ENCODE measurements at regions of chr16 and their contacts with region 1.

Region 1: DNA sequence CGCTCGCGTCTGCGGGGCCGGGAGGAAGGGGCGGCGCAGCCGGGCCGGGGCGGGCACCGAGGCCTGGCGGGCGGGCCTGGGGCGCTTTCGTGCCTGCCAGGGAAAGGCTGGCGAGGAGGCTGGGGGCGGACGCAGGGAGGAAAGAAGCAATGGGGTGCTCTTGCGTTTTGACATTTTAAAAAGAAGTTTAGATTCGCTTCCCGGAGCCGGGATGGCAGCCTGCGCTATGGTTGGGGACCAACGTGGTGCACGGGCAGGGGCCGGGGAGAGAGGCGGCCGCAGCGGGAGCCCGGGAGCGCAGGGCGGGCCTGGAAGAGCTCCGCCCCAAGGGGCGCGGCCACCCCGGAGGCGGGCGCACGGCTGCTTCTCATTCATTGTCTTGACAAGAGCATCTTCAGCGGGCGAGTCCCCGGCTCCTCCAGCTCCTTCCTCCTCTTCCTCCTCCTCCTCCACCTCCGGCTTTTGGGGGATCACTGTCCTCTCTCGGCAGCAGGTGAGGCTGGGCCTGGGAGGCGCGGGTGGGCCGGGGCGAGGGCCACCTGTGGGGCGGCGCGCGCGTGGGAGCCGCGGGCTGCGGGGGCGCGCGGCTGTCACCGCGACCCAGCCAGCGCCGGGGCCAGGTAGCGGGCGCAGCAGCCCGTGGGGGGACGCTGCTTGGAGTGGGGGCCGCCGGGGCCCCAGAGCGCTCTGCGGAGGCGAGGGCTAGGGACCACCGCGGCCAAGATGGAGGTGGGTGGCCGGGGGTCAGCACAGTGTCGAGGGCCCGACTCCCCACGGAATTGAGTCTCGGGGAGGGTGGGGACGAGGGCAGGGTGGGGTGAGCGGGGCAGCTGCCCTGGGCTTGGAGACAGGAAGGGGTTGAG is at the start of gene CORO1A:
- DNase-seq: peak; percentile 91
- ATAC-seq: peak; percentile 32
- H3K4me3 Mint-ChIP-seq: peak within 1 kb of the TSS; percentile 100
- H3K27ac Mint-ChIP-seq: peak within 1 kb of the TSS; percentile 100
- H3K4me1 Mint-ChIP-seq: peaks cover 29% of the 10 kb centered on the region
- H3K27me3 Mint-ChIP-seq: no peaks in the 10 kb centered on the region
- total RNA-seq, gene CORO1A: 1,426 to 1,488 TPM

Region 2: GRCh38 chr16:30065143-30065850 is 118.2 kb before region 1 on chr16 and contains the start of gene ALDOA:
- POLR2A ChIA-PET with region 1: interaction called, 67 read pairs
- DNase-seq: peak; percentile 95
- ATAC-seq: peak; percentile 85
- H3K4me3 Mint-ChIP-seq: peak within 1 kb of the TSS; percentile 100
- H3K27ac Mint-ChIP-seq: peak within 1 kb of the TSS; percentile 98
- H3K4me1 Mint-ChIP-seq: peaks cover 22% of the 10 kb centered on the region
- H3K27me3 Mint-ChIP-seq: no peaks in the 10 kb centered on the region
- total RNA-seq, gene ALDOA: 1,486 to 1,632 TPM

Region 3: DNA sequence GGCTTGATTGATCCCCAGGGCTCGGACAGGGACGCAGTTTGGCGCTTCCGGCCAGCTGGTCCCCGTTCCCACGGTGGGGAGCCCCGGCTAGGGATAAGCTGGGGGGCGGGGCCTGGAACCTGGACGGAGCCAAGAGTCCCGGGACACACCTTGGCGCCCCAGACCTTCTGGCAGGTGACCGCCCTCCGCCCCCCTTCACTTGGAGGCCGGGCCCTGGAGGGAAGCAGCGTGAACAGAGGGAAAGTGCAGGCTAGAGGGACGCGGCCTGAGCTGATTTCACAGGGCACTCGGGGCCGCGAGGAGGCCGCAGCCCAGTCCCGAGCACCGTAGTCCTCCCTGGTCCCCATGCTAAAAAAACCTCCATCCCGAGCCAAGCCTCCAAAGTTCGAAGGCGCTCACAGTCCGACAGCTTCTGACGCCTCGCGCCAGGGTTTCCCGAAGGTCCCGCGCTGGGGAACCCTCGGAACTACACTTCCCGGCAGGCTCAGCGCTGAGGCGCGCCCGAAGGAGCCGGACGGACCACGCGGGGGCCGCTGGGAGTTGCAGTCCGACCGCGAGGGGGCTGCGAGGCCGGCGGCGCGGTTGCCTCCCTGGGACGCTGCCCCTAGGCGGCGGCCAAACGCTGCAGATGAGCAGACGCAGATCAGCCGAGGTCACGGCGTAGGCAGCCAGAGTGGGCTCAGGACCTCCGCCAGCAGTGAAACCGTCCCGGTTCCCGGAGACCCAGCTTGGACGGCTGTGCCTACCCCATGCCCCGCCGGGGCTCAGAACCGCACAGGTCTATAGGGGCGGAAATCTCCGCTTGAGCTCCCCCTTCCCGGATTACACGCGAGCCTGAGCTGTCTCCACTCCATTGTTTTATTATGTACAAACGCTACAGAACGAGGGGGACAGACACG is 91.7 kb before region 1 on chr16 and contains the start of gene TBX6:
- POLR2A ChIA-PET with region 1: interaction called, 132 read pairs
- DNase-seq: peak; percentile 97
- ATAC-seq: peak; percentile 77
- H3K4me3 Mint-ChIP-seq: peak within 1 kb of the TSS; percentile 86
- H3K27ac Mint-ChIP-seq: peak within 1 kb of the TSS; percentile 96
- H3K4me1 Mint-ChIP-seq: peaks cover 47% of the 10 kb centered on the region
- H3K27me3 Mint-ChIP-seq: no peaks in the 10 kb centered on the region
- total RNA-seq, gene TBX6: 2.4 to 3.0 TPM

Region 4: DNA sequence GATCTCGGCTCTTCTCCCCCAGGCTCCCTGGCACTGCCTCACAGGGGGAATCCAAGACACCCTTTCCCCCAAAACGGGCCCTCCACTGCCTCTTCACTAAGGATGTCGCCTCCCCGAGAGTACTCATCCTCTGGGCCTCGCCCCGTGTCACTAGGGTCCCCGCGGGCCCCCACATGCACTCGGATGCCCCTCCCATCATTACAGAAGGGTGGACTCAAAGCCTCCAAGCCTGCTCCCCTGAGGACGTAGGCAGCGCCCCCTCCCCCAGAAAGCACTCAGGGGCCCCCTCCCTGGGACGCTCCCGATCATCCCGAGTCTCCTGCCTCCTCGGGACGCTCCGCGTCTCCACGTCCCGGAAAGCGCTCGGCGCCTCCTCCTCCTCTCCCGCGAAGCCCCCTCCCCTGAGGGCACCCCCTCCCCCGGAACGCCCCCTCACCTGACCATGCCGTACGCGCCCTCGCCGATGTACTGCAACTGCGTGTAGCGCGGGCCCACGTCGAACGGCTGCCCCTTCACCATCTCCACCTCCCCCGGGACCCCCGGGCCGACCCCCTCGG is 60.8 kb before region 1 on chr16:
- POLR2A ChIA-PET with region 1: interaction called, 66 read pairs
- DNase-seq: peak; percentile 51
- ATAC-seq: peak; percentile 30
- H3K4me3 Mint-ChIP-seq: peak overlapping the region; percentile 89
- H3K27ac Mint-ChIP-seq: peak overlapping the region; percentile 88
- H3K4me1 Mint-ChIP-seq: peaks cover 27% of the 10 kb centered on the region
- H3K27me3 Mint-ChIP-seq: no peaks in the 10 kb centered on the region

Region 5: DNA sequence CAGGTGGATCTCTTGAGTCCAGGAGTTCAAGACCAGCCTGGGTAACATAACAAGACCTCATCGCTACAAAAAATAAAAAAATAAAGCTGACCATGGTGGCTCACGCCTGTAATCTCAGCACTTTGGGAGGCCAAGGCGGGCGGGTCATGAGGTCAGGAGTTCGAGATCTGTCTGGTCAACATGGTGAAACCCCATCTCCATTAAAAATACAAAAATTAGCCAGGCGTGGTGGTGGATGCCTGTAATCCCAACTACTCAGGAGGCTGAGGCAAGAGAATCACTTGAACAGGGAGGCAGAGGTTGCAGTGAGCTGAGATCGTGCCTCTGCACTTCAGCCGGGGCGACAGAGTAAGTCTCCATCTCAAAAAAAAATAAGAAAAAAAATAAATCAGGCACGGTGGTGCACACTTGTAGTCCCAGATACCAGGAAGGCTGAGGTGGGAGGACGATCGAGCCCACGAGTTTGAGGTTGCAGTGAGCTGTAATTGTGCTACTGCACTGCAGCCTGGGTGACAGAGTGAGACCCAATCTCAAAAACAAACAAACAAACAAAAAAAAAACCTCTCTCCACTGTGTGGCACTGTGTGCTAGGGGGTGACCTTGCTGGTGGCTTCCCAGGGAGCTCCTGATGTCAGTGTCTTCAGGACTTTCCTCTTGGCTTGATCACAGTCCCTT is 40.7 kb before region 1 on chr16:
- POLR2A ChIA-PET with region 1: interaction called, 70 read pairs
- DNase-seq: no peak
- ATAC-seq: peak; percentile 76
- H3K4me3 Mint-ChIP-seq: peak overlapping the region; percentile 7
- H3K27ac Mint-ChIP-seq: peak overlapping the region; percentile 31
- H3K4me1 Mint-ChIP-seq: peaks cover 16% of the 10 kb centered on the region
- H3K27me3 Mint-ChIP-seq: no peaks in the 10 kb centered on the region

Region 6: GRCh38 chr16:30370444-30371247 is 187.2 kb after region 1 on chr16 and contains the start of gene TBC1D10B:
- POLR2A ChIA-PET with region 1: interaction called, 11 read pairs
- DNase-seq: peak; percentile 96
- ATAC-seq: peak; percentile 83
- H3K4me3 Mint-ChIP-seq: peak within 1 kb of the TSS; percentile 96
- H3K27ac Mint-ChIP-seq: peak within 1 kb of the TSS; percentile 99
- H3K4me1 Mint-ChIP-seq: peaks cover 40% of the 10 kb centered on the region
- H3K27me3 Mint-ChIP-seq: no peaks in the 10 kb centered on the region
- total RNA-seq, gene TBC1D10B: 63.6 to 69.8 TPM

Region 7: DNA sequence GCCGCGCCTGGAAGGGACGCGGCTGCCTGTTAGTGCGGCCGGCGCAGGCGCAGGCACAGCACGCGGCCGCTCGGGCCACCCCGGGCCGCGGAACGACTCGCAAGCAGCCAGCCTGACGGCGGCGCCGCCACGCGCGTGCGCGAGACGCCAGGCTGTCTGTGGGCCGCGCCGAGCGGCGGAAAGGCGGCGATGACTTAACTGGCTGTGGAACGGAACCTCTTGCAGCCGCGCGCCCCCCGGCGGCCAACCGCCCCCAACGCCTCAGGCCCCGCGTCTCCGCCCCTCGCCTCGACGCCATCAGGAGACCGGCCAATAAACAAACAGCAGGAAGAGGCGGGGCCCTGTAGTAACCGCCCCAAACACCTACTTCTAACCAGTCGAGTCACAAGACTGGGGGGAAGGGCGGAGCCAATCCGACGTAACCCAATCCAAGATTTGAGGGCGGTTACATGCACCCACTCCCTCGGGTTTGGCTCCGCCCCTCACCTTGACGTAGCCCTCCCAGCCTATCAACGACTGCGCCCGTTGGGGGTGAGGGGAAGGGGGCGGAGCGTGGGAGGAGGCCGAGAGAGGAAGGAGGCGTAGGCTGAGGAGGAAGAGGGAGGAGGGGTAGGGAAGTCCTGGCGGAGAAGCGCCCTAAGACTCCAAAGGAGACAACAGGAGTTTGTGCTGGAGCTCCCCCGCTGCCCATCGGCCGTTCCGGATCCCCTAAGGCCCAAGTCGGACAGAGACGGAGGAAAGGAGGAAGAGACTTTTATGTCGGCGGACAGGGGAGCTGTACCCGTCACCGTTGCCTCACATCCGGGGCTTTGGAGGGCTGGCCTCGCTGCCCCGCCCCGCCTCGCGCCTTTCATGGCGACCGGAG is 474.6 kb after region 1 on chr16 and contains the start of gene FBRS:
- POLR2A ChIA-PET with region 1: interaction called, 11 read pairs
- DNase-seq: peak; percentile 99
- ATAC-seq: peak; percentile 69
- H3K4me3 Mint-ChIP-seq: peak within 1 kb of the TSS; percentile 93
- H3K27ac Mint-ChIP-seq: peak within 1 kb of the TSS; percentile 100
- H3K4me1 Mint-ChIP-seq: peaks cover 30% of the 10 kb centered on the region
- H3K27me3 Mint-ChIP-seq: no peaks in the 10 kb centered on the region
- total RNA-seq, gene FBRS: 140 to 143 TPM